PC-3 (cell line): ENCODE measurements at regions of chr19 and their contacts with region 1.

Region 1: GRCh38 chr19:15432629-15433518 is 14.1 kb upstream of the AKAP8L start:
- DNase-seq: peak; percentile 90
- ATAC-seq: peak; percentile 81
- H3K4me3 ChIP-seq: peak overlapping the region; percentile 71
- H3K27ac ChIP-seq: no peak overlapping the region
- H3K4me1 ChIP-seq: peaks cover 21% of the 10 kb centered on the region
- H3K27me3 ChIP-seq: no peaks in the 10 kb centered on the region
- CTCF ChIP-seq: no peak

Region 2: GRCh38 chr19:15251749-15252397 is 181.0 kb before region 1 on chr19:
- CTCF ChIA-PET with region 1: no interaction called
- POLR2A ChIA-PET with region 1: no interaction called
- intact Hi-C with region 1: no loop called
- DNase-seq: peak; percentile 55
- ATAC-seq: peak; percentile 36
- H3K4me3 ChIP-seq: no peak overlapping the region
- H3K27ac ChIP-seq: peak overlapping the region; percentile 60
- H3K4me1 ChIP-seq: peaks cover 31% of the 10 kb centered on the region
- H3K27me3 ChIP-seq: no peaks in the 10 kb centered on the region
- CTCF ChIP-seq: peak; percentile 55

Region 3: DNA sequence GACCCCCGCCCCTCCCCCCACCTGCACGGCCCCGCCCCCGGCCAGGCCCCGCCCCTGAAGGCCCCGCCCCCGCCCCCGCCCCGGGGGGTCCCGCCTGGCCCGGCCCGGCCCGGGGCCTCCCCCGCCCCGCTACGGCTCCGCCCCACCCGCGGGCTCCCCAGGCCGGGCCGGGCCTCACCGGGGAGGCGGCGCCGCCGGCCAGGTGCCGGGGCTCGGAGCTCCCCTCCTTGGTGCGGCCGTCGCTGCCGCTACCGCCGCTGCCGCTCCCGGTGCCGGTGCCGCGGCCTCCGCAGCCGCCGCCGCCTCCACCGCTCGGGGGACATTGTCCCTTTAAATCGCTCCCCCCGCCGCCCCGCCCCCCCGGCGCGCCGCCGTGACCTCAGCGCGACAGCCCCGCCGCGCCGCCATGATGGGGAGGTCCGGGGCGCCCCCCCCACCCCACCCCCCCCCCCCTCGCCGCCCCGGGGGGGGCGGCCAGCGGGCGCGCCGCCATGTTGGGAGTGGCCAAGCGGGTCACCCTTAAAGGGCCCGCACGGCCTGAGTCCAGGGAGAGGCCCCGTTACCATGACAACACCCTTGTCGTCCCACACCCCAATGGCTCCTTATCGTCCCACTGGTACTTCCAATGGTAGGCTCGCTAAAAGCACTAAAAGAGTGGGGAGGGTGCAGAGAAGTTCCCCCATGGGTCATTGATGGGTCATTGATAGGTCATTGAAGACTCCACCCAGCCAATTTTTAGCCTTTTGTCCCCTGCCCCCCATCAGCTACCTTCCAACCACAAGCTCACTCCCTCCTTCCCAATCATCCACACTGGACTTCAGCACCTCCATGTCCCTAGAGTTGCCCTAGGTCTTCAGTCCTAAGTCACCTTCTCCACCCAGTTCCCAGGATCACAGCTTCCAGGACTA is 17.0 kb after region 1 on chr19 and contains the start of gene WIZ:
- CTCF ChIA-PET with region 1: no interaction called
- POLR2A ChIA-PET with region 1: interaction called, 6 read pairs
- intact Hi-C with region 1: loop called (anchors 2 kb)
- DNase-seq: peak; percentile 72
- ATAC-seq: peak; percentile 34
- H3K4me3 ChIP-seq: peak within 1 kb of the TSS; percentile 57
- H3K27ac ChIP-seq: no peak within 1 kb of the TSS
- H3K4me1 ChIP-seq: peaks cover 15% of the 10 kb centered on the region; the same call in 1 of the 2 replicates
- H3K27me3 ChIP-seq: no peaks in the 10 kb centered on the region
- CTCF ChIP-seq: no peak
- total RNA-seq, gene WIZ: 30.9 and 35.1 TPM in 2 replicates